Spleen (tissue), 13 donors: ENCODE measurements at regions of chr5 and their contacts with region 1.

Region 1: GRCh38 chr5:56270568-56271392 is 37.6 kb upstream of the ANKRD55 start:
- DNase-seq: peak; percentile 91
- H3K4me3 ChIP-seq: no peak overlapping the region
- H3K27ac ChIP-seq: peak overlapping the region in 7 of 8 donors; percentile 34 to 67 (median 58)
- H3K4me1 ChIP-seq: peaks cover 0 to 24% (median 15%) of the 10 kb centered on the region in 6 donors
- H3K27me3 ChIP-seq: no peaks in the 10 kb centered on the region
- CTCF ChIP-seq: peak; percentile 91 to 99 (median 97)
- POLR2A ChIP-seq: no peak

Region 2: DNA sequence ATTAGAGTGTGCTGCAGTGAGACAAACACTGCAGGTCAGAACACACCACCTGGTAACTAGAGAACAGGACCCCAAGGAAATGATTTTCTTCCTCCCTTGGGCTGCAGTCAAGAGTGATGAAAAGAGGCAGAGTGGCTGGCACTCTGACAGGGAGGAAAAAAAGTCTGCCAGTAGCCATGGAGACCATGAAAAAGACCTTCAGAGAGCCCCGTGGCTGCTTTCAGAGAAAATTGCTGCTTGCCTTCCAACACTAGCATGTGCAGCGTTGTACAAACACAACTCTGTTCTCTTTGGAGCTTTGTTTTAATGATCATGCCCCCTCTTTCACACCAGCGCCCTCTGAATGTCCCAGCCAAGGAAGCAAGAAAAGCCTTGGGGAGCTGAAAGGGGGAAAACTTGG is 106.4 kb before region 1 on chr5:
- intact Hi-C with region 1: no loop called
- DNase-seq: no peak
- H3K4me3 ChIP-seq: no peak overlapping the region
- H3K27ac ChIP-seq: no peak overlapping the region
- H3K4me1 ChIP-seq: peaks cover 0 to 85% (median 26%) of the 10 kb centered on the region in 6 donors
- H3K27me3 ChIP-seq: no peaks in the 10 kb centered on the region
- CTCF ChIP-seq: no peak
- POLR2A ChIP-seq: no peak

Region 3: DNA sequence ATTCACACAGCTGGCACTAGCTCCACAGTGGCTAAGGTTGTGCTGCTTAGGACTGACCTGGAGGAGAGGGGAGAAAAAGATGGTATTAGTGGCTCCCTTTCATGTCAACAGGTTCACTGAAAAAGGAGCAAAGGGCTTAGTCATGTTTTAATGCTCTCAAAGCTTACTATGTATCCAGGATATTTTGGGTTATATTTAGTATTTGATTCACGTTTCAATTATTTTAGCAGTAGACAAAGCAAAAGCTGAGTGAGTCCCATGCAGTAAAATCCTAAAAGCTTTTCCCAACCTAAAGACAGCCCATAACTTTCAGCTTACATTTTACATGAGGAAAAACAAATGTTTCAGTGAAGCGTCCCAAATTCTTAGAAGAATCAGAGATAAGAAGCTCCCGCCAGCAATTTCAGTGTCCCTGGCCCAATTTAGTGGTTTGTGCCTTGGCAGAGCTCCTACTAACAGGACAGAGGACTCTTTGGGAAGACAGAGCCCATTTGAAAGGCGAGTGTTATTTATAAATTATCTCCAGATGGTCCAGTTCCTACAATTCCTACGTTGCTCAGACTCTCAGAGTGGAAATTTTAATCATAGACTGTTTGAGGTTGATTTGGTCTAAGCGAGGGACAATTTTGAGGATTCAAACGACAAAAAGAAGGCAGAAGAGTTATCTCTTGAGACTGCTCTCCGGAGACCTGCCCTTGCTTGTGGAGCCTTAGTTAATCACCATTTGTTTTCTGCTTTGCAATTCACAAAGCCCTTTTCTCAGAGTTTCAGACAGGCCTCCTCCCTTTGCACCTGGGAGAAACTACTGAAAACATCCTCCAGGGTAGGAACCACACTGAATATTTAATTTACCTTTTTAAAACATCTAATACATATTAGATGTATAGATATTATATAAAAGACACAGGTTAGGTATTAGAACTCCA is 187.4 kb after region 1 on chr5:
- intact Hi-C with region 1: no loop called
- DNase-seq: no peak
- H3K4me3 ChIP-seq: no peak overlapping the region
- H3K27ac ChIP-seq: peak overlapping the region in 1 of 8 donors; percentile 4
- H3K4me1 ChIP-seq: no peaks in the 10 kb centered on the region
- H3K27me3 ChIP-seq: no peaks in the 10 kb centered on the region
- CTCF ChIP-seq: no peak
- POLR2A ChIP-seq: no peak

Region 4: GRCh38 chr5:56838409-56839039 is 567.7 kb after region 1 on chr5:
- intact Hi-C with region 1: loop called (anchors 5 kb)
- DNase-seq: no peak
- H3K4me3 ChIP-seq: peak overlapping the region in 1 of 8 donors; percentile 20
- H3K27ac ChIP-seq: peak overlapping the region in 7 of 8 donors; percentile 64 to 79 (median 71)
- H3K4me1 ChIP-seq: peaks cover 60 to 100% (median 97%) of the 10 kb centered on the region in 6 donors
- H3K27me3 ChIP-seq: no peaks in the 10 kb centered on the region
- CTCF ChIP-seq: peak; percentile 20 to 82 (median 59)
- POLR2A ChIP-seq: no peak

Region 5: GRCh38 chr5:57137401-57137800 is 866.6 kb after region 1 on chr5:
- intact Hi-C with region 1: loop called (anchors 10 kb)
- DNase-seq: no peak
- H3K4me3 ChIP-seq: no peak overlapping the region
- H3K27ac ChIP-seq: no peak overlapping the region
- H3K4me1 ChIP-seq: no peaks in the 10 kb centered on the region
- H3K27me3 ChIP-seq: peaks cover 0 to 8% (median 0%) of the 10 kb centered on the region in 7 donors
- CTCF ChIP-seq: no peak
- POLR2A ChIP-seq: no peak

Region 6: DNA sequence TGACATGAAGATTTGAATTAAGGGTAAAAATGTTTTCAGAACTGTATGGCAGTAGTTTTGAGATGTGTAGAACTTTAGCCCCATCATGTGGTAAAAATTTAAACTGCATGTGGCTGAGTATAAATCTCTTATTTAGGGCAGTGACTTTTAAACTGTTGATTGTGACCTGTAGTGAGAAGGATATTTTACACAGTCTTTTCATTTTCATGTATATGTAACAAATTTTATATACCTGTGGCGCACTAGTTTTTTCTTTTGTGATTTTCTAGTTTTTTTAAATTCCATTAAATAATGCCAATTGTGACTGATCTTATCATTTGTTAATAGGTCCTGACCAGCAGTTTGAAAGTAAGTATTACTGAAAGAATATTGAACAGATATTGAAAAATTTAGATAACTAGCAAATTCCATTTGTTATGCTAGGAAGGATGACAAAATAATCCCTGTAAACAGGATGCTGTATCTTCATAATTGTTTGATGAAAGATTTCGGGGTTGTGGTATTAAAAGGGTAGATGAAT is 950.3 kb after region 1 on chr5:
- intact Hi-C with region 1: loop called (anchors 10 kb)
- DNase-seq: no peak
- H3K4me3 ChIP-seq: no peak overlapping the region
- H3K27ac ChIP-seq: no peak overlapping the region
- H3K4me1 ChIP-seq: peaks cover 9 to 78% (median 31%) of the 10 kb centered on the region in 6 donors
- H3K27me3 ChIP-seq: no peaks in the 10 kb centered on the region
- CTCF ChIP-seq: peak; percentile 55 to 97 (median 85)
- POLR2A ChIP-seq: no peak